Heart left ventricle (tissue), 16 donors: ENCODE measurements at regions of chr17 and their contacts with region 1.

Region 1: DNA sequence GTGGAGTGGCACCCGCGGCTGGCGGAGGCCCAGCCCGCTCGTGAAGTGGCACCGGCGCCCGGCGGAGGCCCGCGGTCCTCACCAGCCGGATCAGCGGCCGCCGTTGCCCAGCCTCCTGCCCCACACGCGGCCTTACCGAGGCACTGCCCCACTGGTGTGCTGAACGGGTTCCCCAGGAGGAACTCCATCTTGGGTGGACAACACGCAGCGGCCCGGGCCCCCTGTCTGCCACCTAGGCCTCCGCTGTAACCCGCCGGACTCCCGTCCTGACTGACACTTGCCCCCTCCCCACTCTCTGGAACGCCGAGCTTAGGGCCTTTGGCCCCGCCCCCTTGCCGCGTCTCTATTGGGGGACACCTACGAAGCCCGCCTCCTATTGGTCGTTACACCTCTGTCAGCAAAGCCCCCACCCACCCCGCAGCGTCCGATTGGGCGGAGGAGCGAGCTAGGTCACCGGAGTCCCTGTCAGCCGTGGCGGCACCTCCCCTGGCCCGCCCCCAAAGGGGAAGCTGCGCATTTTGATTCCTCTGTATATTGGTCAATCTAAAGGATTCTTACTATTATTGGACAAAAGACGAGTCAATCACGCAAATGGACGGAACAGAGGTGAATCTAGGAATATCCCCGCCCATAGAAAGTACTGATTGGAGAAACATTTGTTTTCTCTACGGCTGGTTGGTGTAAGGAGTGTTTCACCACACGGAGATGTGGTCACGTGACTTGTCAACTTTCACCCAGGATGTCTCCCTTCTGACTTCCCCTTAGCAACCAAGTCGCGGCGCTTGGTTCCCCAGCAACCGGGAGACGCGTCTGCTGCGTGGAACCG is at the starts of genes DRC3 and TOM1L2:
- DNase-seq: peak; percentile 100
- ATAC-seq: peak; percentile 97 to 98 (median 98)
- H3K4me3 ChIP-seq: peak within 1 kb of the TSS; percentile 71 to 98 (median 91)
- H3K27ac ChIP-seq: peak within 1 kb of the TSS; percentile 66 to 95 (median 93)
- H3K4me1 ChIP-seq: peaks cover 3 to 46% (median 29%) of the 10 kb centered on the region in 12 donors
- H3K27me3 ChIP-seq: no peaks in the 10 kb centered on the region
- CTCF ChIP-seq: peak in 7 of 12 donors; percentile 4 to 57 (median 39)
- POLR2A ChIP-seq: peak; percentile 96
- total RNA-seq, gene DRC3: 0.42 to 3.7 (median 1.00) TPM
- total RNA-seq, gene TOM1L2: 210 to 345 (median 247) TPM

Region 2: GRCh38 chr17:17823433-17824118 is 148.8 kb before region 1 on chr17:
- intact Hi-C with region 1: loop called in 1 of 10 experiments (anchors 5 kb)
- DNase-seq: peak; percentile 86 to 93 (median 88)
- ATAC-seq: peak; percentile 83 to 90 (median 90)
- H3K4me3 ChIP-seq: peak overlapping the region in 11 of 12 donors; percentile 22 to 69 (median 57)
- H3K27ac ChIP-seq: peak overlapping the region; percentile 43 to 88 (median 83)
- H3K4me1 ChIP-seq: peaks cover 26 to 83% (median 42%) of the 10 kb centered on the region in 12 donors
- H3K27me3 ChIP-seq: no peaks in the 10 kb centered on the region
- CTCF ChIP-seq: no peak
- POLR2A ChIP-seq: no peak

Region 3: GRCh38 chr17:17890773-17891759 is 81.3 kb before region 1 on chr17:
- intact Hi-C with region 1: loop called in 3 of 10 experiments (anchors 5 to 10 kb)
- DNase-seq: peak in 3 of 5 donors; percentile 49 to 64 (median 58)
- ATAC-seq: peak; percentile 58 to 74 (median 65)
- H3K4me3 ChIP-seq: no peak overlapping the region
- H3K27ac ChIP-seq: no peak overlapping the region
- H3K4me1 ChIP-seq: peaks cover 4 to 41% (median 21%) of the 10 kb centered on the region in 12 donors
- H3K27me3 ChIP-seq: no peaks in the 10 kb centered on the region
- CTCF ChIP-seq: peak; percentile 43 to 78 (median 62)
- POLR2A ChIP-seq: no peak

Region 4: DNA sequence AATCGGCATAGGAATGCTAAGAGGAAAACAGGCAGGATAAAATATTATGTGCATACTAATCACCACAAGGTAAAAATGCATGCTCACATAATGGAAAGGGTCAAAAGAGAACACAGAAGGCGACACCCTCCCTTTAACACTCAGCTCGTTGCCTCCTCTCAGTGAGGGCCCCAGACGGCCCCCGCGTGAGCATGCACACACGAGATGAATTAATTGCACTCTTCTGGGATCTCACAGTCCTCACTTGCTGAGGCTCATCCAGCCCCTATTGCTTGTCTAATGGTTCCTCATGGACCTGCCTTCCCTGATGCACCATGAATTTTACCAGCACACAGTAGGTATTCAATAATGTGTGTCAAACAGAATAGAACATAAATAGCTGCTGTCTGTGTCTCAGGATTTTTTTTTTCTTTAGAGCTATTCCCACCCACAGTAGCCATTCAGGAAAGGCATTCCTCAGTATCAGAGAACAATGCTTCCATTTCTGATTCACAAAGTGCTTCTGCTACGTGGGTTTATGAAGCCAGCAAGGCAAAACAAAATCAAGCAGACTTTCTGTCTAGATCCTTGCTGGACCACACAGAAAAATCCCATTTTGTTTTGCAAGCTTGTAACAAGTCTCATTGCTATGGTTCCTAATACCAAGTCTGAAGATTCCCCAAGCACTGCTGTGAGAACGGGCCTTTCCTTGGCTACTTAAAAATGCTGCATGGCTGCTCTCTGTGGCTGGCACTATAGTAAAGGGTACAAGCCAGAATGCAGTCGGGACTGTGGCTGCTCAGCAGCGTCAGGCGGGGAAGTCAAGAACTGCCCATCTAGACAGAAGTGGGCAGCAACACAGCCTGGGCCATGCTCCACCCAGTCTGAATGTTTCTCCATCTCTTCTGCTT is 43.7 kb before region 1 on chr17:
- intact Hi-C with region 1: loop called in 7 of 10 experiments (anchors 2 to 5 kb)
- DNase-seq: no peak
- ATAC-seq: peak; percentile 32 to 79 (median 50)
- H3K4me3 ChIP-seq: no peak overlapping the region
- H3K27ac ChIP-seq: peak overlapping the region in 11 of 12 donors; percentile 41 to 82 (median 69)
- H3K4me1 ChIP-seq: peaks cover 3 to 88% (median 42%) of the 10 kb centered on the region in 12 donors
- H3K27me3 ChIP-seq: no peaks in the 10 kb centered on the region
- CTCF ChIP-seq: no peak
- POLR2A ChIP-seq: no peak

Region 5: GRCh38 chr17:18033442-18034099 is 61.2 kb after region 1 on chr17:
- intact Hi-C with region 1: loop called in 4 of 10 experiments (anchors 2 to 10 kb)
- DNase-seq: peak in 2 of 5 donors; percentile 67 to 70
- ATAC-seq: peak; percentile 74 to 89 (median 85)
- H3K4me3 ChIP-seq: no peak overlapping the region
- H3K27ac ChIP-seq: no peak overlapping the region
- H3K4me1 ChIP-seq: peaks cover 0 to 54% (median 26%) of the 10 kb centered on the region in 12 donors
- H3K27me3 ChIP-seq: no peaks in the 10 kb centered on the region
- CTCF ChIP-seq: peak; percentile 42 to 74 (median 64)
- POLR2A ChIP-seq: no peak